AG04449 (cell line): ENCODE measurements at regions of chr2 and their contacts with region 1.

Region 1: GRCh38 chr2:191555092-191555742 is 122.7 kb upstream of the NABP1 start:
- DNase-seq: no peak
- H3K4me3 ChIP-seq: no peak overlapping the region
- CTCF ChIP-seq: peak; percentile 61

Region 2: DNA sequence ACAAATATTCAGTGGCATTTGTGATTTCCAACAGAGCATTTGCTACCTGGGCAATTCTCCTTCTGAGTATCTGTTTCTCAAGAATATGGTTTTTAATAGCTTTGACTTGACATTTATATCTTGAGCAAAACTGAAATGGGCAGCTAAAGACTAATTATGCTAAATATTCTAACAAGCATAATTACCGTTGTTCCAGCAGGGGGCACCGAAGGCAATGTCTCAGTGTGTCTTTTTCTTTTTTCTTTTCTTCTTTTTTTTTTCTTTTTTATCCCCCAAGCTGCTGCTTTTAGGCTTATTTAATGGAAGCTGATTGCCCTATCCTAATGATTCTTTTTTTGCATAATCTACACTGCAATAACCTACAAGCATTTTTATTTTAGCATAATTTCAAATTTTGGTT is 16.1 kb before region 1 on chr2:
- CTCF ChIA-PET with region 1: interaction called, 48 read pairs
- POLR2A ChIA-PET with region 1: no interaction called
- DNase-seq: no peak
- H3K4me3 ChIP-seq: no peak overlapping the region
- CTCF ChIP-seq: peak; percentile 51

Region 3: DNA sequence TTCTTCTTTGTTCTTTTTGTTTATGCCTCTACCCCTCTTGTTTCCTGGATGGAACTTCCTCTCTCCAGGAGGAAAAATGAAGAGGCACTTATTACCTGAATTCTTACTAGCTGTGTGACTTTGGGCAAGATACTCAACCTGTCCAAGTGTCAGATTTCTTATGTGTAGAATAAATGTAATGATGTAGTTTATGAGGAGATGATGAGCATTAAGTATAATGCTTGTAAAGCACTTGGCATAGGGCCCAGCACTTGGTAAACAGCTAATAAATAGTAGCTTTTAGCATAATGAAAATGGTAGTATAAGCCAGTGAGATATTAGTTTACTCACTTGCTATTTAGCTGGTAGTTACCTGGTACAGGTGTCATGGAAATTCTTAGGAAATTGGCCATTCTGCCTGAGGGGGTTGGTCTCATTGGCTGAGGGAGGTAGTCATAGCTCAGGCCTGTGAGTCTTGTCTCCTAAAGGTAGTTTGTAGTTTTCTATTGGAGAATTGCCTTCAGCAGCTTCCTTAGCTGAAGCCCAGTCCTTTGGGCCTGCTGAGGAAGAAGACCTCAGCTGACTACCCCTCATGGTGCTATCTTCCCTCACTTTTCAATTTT is 10.7 kb before region 1 on chr2:
- CTCF ChIA-PET with region 1: interaction called, 48 read pairs
- POLR2A ChIA-PET with region 1: no interaction called
- DNase-seq: no peak
- H3K4me3 ChIP-seq: no peak overlapping the region
- CTCF ChIP-seq: no peak

Region 4: DNA sequence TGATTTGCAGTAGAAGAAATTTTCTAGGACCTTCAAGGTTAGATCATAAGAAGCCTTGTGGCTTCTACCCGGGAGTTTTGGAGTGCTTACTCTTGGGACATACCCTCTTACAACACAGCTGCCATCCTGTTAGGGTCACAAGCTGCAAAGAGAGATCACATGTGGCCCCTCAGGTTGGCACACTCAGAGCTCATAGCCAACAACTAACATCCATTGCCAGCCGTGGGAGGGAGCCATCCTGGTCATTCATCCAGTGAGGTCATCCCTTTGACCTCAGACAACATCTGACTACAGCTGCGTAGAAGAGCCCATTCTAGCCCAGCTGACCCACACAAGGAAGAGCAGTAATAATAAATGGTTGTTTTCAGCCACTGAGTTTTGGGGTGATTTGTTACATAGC is 45.8 kb after region 1 on chr2:
- CTCF ChIA-PET with region 1: no interaction called
- POLR2A ChIA-PET with region 1: no interaction called
- DNase-seq: no peak
- H3K4me3 ChIP-seq: no peak overlapping the region
- CTCF ChIP-seq: no peak

Region 5: GRCh38 chr2:191635333-191636234 is 80.4 kb after region 1 on chr2:
- CTCF ChIA-PET with region 1: no interaction called
- POLR2A ChIA-PET with region 1: no interaction called
- DNase-seq: peak; percentile 80
- H3K4me3 ChIP-seq: no peak overlapping the region
- CTCF ChIP-seq: no peak

Region 6: GRCh38 chr2:191691016-191691735 is 136.0 kb after region 1 on chr2:
- CTCF ChIA-PET with region 1: interaction called, 17 read pairs
- POLR2A ChIA-PET with region 1: no interaction called
- DNase-seq: peak; percentile 60
- H3K4me3 ChIP-seq: no peak overlapping the region
- CTCF ChIP-seq: peak; percentile 73